ENCODE measurements at regions of chr11 and their contacts with region 1.

Region 1: GRCh38 chr11:78194490-78194889 is 5.8 kb downstream of the USP35 start:
- DNase-seq: no peak
- H3K4me3 ChIP-seq: no peak overlapping the region
- H3K27ac ChIP-seq: no peak overlapping the region
- H3K4me1 ChIP-seq: peaks cover 3 to 6% of the 10 kb centered on the region in 2 donors
- H3K27me3 ChIP-seq: no peaks in the 10 kb centered on the region
- CTCF ChIP-seq: no peak
- POLR2A ChIP-seq: no peak

Region 2: DNA sequence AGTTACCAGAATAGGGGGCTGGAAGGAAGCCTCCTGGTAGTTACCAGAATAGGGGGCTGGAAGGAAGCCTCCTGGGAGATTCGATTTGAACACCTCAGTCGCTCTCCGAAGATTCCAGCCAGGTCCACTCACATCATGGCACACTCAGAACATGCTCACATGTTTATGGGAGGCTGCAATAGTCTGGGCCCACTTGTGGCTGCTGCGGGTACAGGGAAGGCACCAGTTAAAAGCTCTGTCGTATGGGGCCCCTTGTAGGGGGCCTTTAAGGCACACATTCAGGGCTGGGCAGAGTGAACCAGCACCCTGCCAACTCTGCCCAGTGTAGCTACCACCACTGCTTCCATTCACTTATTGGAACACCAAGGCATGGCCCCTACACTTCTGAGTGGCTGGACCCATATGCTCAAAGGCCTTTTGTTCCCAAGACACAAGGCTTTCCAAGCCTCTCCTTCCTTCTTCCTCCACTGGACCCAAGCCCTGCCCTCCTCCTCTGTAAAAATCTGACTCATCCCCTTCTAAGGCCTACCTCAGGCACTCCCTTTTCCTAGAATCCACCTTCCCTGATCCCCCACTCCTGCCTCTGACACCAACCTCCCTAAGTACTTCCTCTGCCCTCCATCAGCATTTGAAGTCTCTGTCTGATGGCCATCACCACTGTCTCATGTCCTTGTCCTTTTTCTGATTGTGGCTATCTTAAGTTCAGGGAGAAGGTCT is 22.2 kb after region 1 on chr11:
- intact Hi-C with region 1: loop called (anchors 1 kb)
- DNase-seq: no peak
- H3K4me3 ChIP-seq: no peak overlapping the region
- H3K27ac ChIP-seq: peak overlapping the region; percentile 22 to 25
- H3K4me1 ChIP-seq: no peaks in the 10 kb centered on the region
- H3K27me3 ChIP-seq: no peaks in the 10 kb centered on the region
- CTCF ChIP-seq: no peak
- POLR2A ChIP-seq: no peak

Region 3: DNA sequence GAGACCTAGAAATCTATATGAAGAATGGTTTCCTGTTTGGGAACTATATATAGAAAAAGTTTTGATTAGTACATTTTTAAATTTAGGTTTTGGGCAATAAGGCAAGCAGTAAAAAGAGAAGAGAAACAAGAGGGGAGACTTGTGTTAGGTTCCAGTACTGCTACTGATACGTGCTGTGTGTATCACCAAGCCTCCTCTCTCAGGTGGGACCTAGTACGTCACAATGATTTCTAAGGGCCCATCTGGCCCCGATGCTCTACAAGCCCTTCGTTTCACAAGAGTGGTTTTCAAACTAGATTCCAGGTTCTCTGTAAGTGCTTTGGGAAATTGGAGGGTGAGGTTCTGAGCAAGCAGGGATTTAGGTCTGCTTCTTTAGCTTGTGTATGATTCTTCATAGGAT is 33.4 kb after region 1 on chr11:
- intact Hi-C with region 1: loop called (anchors 1 kb)
- DNase-seq: no peak
- H3K4me3 ChIP-seq: no peak overlapping the region
- H3K27ac ChIP-seq: no peak overlapping the region
- H3K4me1 ChIP-seq: no peaks in the 10 kb centered on the region
- H3K27me3 ChIP-seq: no peaks in the 10 kb centered on the region
- CTCF ChIP-seq: no peak
- POLR2A ChIP-seq: no peak